Aorta (tissue), 5 donors: ENCODE measurements at regions of chrX and their contacts with region 1.

Region 1: GRCh38 chrX:69285881-69286564 is 120.8 kb upstream of the PJA1 start:
- DNase-seq: peak; percentile 73 to 91
- ATAC-seq: peak; percentile 81
- H3K4me3 ChIP-seq: peak overlapping the region; percentile 14 to 21
- H3K27ac ChIP-seq: no peak overlapping the region
- H3K4me1 ChIP-seq: no peaks in the 10 kb centered on the region
- H3K27me3 ChIP-seq: no peaks in the 10 kb centered on the region

Region 2: GRCh38 chrX:68511255-68511654 is 774.8 kb before region 1 on chrX:
- intact Hi-C with region 1: loop called in 1 of 2 experiments (anchors 5 kb)
- DNase-seq: no peak
- ATAC-seq: no peak
- H3K4me3 ChIP-seq: no peak overlapping the region
- H3K27ac ChIP-seq: no peak overlapping the region
- H3K4me1 ChIP-seq: no peaks in the 10 kb centered on the region
- H3K27me3 ChIP-seq: no peaks in the 10 kb centered on the region

Region 3: DNA sequence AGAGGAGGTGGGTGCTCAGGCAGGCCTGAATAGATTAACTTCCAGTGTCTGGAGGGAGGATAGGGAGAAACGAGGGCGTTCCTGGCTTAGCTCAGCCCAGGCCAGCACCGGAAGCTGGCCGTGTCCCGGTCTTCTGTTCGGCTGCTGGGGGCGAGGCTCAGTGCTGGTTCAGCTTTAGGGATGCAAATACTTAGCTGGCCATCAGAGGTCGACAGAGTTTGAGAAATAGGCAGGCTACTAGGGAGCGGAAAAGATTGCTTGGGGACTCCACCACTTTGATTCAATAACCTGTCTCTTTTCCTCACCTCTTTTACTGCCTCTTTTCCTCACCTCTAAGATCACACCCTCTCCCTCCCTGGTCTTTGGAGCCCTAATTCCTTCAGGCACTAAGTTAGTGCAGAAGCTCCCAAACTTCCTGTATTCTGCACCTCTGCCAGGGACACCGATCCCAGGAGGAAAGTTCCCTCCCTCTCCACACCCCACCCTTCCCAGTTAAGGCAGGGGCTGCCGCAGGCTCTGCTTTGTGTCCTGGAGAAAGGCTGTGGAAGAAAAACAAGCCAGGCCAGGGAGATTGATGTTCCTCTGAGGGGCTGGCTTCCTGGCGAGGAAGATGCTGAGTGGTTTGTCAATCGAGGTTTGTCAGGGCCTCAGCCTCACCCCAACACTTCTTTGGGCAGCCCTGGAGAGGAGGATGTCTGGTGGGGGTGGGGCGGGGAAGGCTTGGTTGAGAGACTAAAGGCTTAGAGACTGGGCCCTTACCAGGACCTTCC is 463.2 kb before region 1 on chrX:
- intact Hi-C with region 1: loop called (anchors 2 kb)
- DNase-seq: peak; percentile 65 to 79
- ATAC-seq: peak; percentile 64
- H3K4me3 ChIP-seq: no peak overlapping the region
- H3K27ac ChIP-seq: no peak overlapping the region
- H3K4me1 ChIP-seq: no peaks in the 10 kb centered on the region
- H3K27me3 ChIP-seq: no peaks in the 10 kb centered on the region

Region 4: GRCh38 chrX:69093960-69094871 is 191.8 kb before region 1 on chrX:
- intact Hi-C with region 1: loop called (anchors 5 to 10 kb)
- DNase-seq: no peak
- ATAC-seq: no peak
- H3K4me3 ChIP-seq: no peak overlapping the region
- H3K27ac ChIP-seq: no peak overlapping the region
- H3K4me1 ChIP-seq: no peaks in the 10 kb centered on the region
- H3K27me3 ChIP-seq: no peaks in the 10 kb centered on the region

Region 5: DNA sequence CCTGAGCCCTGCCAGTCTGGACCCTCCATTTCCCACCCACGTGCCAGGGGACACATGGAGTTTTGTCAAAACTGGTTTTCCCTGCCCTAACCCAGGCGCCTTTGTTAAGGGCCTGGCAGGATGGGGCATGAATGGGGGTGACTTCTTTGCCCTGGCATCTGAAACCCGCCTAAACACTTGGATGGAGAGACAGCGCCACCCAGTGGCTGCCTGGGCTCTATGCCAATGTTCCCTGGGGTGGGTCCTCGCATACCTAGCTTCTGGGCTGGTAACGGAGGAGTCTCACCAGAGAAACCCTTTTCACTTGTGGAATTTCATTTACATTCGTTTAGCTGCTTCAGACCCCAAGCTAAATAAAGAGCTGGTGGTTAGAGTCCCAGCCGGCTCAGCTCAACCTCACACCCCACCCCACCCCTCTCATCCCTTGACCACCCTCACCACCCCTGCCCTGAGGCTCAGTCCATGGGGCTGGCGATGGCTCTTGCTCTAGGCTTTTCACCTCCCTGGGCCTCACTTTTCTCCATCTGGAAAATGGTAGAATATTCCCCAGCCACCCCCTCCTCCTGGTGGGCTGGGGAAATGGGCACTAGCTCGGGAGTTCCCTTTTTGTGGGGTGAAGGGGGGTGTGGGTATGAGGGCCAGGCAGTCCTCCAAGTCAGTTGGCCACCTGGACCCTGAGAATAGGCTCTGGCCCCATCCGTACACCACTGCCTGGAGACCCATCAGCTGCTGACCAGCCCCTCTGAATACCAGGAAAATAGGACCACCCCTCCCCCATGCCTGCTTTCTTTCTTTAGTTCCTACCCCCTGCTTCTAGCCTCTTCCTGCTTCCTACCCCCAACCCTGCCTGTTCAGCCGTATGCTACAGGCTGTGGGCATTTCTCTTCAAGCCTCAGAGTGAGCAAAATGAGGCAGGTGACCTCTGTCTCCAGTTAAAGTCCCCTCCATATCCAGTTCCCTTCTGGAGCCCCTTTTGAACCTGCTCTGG is 63.6 kb before region 1 on chrX:
- intact Hi-C with region 1: loop called in 1 of 2 experiments (anchors 5 kb)
- DNase-seq: peak; percentile 75 to 89
- ATAC-seq: no peak
- H3K4me3 ChIP-seq: no peak overlapping the region
- H3K27ac ChIP-seq: no peak overlapping the region
- H3K4me1 ChIP-seq: no peaks in the 10 kb centered on the region
- H3K27me3 ChIP-seq: no peaks in the 10 kb centered on the region

Region 6: DNA sequence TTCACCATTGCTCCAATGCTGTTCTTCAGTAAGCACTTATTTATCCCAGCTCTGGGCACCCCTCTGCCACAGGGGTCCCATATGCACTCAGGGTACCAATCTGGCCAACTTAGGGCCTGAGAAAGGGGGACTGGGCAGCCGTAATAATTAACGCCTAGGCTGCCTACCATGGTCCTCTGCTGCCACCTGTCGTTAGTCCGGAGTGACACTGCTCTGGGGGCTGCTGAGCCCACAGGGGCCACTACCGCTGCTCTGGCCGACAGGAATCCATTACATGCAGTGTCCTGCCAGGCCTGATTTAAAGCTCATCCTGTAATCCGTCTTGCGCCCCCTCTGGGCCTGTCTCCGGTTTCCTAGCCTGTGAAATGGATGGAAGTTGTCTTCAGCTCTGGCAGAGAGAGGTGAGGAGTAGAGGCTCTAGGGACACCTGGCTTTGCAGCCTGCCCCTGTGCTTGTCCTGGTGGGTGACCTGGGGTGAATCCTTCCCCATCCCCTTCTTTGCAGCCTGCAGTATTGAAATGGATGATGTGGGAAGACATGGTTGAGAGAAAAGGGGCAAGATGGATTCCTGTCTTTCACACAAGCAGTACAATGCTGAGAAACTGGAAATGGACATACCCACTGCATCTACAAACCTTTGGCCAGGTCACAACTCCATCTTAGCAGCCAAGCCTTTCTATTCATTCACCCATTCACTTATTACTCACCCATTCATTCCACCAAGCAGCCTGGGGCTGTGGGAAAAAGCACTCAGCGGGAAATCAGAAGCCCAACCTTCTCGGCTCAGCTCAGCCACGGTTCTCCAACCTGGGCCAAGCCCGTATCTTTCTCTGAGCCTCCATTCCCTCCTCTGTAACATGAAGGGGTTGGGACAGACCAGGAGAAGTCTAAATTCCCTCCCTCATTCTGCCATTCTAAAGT is 101.8 kb after region 1 on chrX:
- intact Hi-C with region 1: loop called in 1 of 2 experiments (anchors 5 kb)
- DNase-seq: peak in 1 of 2 donors; percentile 77
- ATAC-seq: peak; percentile 68
- H3K4me3 ChIP-seq: no peak overlapping the region
- H3K27ac ChIP-seq: no peak overlapping the region
- H3K4me1 ChIP-seq: no peaks in the 10 kb centered on the region
- H3K27me3 ChIP-seq: no peaks in the 10 kb centered on the region

Region 7: DNA sequence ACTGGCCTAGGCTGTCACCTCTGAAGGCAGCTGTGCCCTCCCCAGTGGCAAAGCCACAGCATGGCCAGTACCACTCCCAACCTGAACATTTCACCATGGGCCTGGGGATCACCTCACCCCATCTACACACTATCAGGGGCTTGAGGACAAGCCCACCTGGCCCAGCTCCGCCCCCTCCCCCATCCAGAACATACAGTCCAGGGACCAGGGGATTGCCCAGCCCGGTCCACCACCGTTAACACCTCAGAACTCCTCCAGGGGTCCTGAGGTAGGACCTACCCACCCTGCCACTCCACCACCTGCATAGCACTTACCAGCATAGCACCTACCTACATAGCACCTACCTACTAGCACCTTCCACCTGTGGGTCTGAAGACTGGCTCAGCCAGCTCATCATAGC is 509.7 kb after region 1 on chrX:
- intact Hi-C with region 1: no loop called
- DNase-seq: no peak
- ATAC-seq: no peak
- H3K4me3 ChIP-seq: no peak overlapping the region
- H3K27ac ChIP-seq: no peak overlapping the region
- H3K4me1 ChIP-seq: no peaks in the 10 kb centered on the region
- H3K27me3 ChIP-seq: no peaks in the 10 kb centered on the region